ENCODE measurements at regions of chr6 and their contacts with region 1.

Region 1: DNA sequence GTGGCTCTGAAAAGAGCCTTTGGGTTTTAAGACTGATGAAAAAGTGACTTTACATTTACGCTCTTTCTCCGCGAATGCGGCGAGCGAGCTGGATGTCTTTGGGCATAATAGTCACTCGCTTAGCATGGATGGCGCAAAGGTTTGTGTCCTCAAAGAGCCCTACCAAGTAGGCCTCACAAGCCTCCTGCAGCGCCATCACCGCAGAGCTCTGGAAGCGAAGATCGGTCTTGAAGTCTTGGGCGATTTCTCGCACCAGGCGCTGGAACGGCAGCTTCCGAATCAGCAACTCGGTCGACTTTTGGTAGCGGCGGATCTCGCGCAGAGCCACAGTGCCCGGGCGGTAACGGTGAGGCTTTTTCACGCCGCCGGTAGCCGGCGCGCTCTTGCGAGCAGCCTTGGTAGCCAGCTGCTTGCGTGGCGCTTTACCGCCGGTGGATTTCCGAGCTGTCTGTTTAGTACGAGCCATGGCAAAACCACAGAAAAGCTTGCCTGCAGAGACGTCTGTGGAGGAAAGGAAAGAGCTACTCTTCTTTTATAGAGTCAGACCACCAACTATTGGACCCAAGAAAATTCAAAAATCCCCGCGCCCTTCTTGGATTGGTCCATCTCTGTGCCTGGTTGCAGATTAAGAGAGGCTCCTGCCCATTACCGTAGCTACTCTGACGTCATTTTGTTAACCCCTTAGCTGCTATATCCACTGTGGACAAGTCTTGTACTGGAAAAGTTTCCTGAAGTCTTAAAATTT is 55.5 kb upstream of the HFE start:
- DNase-seq: peak; percentile 74
- ATAC-seq: peak; percentile 87

Region 2: DNA sequence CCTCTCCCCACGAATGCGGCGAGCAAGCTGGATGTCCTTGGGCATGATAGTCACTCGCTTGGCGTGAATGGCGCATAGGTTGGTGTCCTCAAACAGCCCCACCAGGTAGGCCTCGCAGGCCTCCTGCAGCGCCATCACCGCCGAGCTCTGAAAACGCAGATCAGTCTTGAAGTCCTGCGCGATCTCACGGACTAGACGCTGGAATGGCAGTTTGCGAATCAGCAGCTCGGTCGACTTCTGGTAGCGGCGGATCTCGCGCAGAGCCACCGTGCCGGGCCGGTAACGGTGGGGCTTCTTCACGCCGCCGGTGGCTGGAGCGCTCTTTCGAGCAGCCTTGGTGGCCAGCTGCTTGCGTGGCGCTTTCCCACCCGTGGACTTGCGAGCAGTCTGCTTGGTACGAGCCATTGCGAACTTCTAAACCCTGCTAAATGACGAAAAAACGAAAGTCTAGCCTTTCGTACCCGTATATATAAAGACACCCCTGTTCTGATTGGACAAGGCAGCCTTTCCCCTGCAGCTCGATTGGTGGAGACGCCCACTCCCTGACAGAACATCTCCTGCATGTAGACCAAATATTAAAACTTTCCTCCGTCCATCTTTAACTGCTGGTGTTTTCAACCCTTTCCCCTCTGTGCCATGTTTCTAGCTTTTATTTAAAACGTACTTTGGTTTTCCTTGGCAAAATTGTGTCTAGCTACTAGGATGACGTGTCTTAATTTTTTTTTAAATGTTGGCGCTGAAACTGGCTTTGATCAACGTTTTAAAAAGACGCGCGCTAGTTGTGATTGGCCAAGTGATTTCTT is 165.3 kb after region 1 on chr6:
- intact Hi-C with region 1: loop called (anchors 10 kb)
- DNase-seq: peak; percentile 72
- ATAC-seq: peak; percentile 57

Measured in Right ventricle myocardium superior (tissue), 1 donor.